Activated naive CD4-positive, alpha-beta T cell treated with anti-CD3 and anti-CD28 coated beads for 36 hours (primary cell): ENCODE measurements at regions of chr3 and their contacts with region 1.

Region 1: GRCh38 chr3:107927361-107928083 is 163.3 kb downstream of the CD47 start:
- DNase-seq: peak; percentile 74
- H3K4me3 Mint-ChIP-seq: peak overlapping the region; percentile 70
- H3K27ac Mint-ChIP-seq: no peak overlapping the region
- H3K4me1 Mint-ChIP-seq: peaks cover 7% of the 10 kb centered on the region
- H3K27me3 Mint-ChIP-seq: peaks cover 11% of the 10 kb centered on the region

Region 2: DNA sequence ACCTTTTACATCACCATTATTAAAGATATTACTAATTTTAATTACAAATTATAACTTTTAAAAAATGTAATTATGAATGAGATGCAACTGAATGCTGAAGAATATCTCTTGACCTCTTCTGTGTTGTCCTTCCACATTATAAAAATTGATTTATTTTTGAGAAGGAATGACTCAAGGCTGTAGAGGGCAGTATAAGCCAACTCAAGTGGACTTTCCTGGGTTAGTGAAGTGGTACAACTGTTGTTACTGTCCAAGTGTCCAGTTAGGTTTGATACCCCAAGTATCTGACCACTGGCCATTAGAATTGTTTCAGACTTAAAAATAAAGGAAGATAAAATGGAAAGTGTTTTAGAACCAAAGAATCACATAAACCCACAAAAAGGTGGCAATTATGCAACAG is 352.9 kb before region 1 on chr3:
- CTCF ChIA-PET with region 1: interaction called, 3 read pairs
- intact Hi-C with region 1: loop called (anchors 2 kb)
- DNase-seq: peak; percentile 22
- H3K4me3 Mint-ChIP-seq: no peak overlapping the region
- H3K27ac Mint-ChIP-seq: no peak overlapping the region
- H3K4me1 Mint-ChIP-seq: peaks cover 27% of the 10 kb centered on the region
- H3K27me3 Mint-ChIP-seq: no peaks in the 10 kb centered on the region

Region 3: GRCh38 chr3:107660306-107660976 is 267.1 kb before region 1 on chr3:
- CTCF ChIA-PET with region 1: no interaction called
- intact Hi-C with region 1: loop called (anchors 2 kb)
- DNase-seq: no peak
- H3K4me3 Mint-ChIP-seq: no peak overlapping the region
- H3K27ac Mint-ChIP-seq: no peak overlapping the region
- H3K4me1 Mint-ChIP-seq: peaks cover 21% of the 10 kb centered on the region
- H3K27me3 Mint-ChIP-seq: no peaks in the 10 kb centered on the region

Region 4: DNA sequence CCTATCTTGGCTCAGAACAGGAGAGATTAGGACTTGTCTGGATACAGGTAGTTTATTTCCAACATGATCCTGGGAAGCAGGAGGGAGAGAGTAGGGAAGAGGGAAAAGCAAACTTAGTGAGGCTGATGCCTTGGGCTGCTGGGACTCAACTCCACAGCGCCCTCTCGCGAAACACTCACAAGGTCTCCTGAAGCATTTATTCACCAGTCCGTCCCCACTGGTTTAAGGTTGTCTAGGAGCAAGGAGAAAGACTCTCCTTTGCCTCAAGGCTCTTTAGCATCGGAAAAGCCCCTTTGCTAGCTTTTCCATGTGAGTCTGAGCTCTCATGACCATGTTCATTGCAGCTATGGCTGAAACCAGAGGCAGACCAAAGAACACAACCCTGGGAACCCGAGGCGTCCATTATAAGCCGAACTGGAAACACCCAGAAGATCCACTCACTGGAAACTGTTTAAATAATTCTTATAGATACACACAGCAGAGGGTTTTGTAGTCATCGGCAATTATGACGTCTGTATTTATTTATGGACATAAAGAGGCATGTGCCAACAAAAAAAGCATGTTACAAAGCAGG is 81.2 kb before region 1 on chr3:
- CTCF ChIA-PET with region 1: interaction called, 10 read pairs
- intact Hi-C with region 1: no loop called
- DNase-seq: peak; percentile 65
- H3K4me3 Mint-ChIP-seq: no peak overlapping the region
- H3K27ac Mint-ChIP-seq: no peak overlapping the region
- H3K4me1 Mint-ChIP-seq: no peaks in the 10 kb centered on the region
- H3K27me3 Mint-ChIP-seq: no peaks in the 10 kb centered on the region

Region 5: GRCh38 chr3:107855708-107856107 is 71.8 kb before region 1 on chr3:
- CTCF ChIA-PET with region 1: interaction called, 12 read pairs
- intact Hi-C with region 1: no loop called
- DNase-seq: no peak
- H3K4me3 Mint-ChIP-seq: no peak overlapping the region
- H3K27ac Mint-ChIP-seq: no peak overlapping the region
- H3K4me1 Mint-ChIP-seq: no peaks in the 10 kb centered on the region
- H3K27me3 Mint-ChIP-seq: peaks cover 3% of the 10 kb centered on the region

Region 6: DNA sequence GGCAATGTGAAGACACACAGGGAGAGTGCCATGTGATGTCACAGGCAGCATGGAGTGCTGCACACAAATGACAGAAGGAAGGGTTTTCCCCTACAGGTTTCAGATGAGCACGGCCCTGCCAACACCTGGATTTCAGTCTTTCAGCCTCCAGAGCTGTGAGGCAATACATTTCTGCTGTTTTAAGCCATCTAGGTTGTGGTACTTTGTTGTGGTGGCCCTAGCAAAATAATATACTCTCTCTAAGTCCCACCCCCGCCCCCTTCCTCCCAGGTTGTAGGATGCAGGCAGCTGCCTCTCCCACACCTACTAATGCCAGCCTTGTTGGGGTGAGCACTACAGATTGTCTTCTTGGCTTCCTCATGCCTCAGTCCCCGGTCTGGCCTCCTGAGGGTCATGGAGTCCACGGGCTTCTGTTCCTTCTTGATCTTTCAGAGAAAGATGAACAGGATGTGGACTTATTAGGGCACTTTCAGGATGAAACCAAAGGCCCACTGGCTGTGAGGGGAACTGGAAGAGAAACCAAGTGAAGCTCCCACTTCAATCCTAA is 16.7 kb before region 1 on chr3:
- CTCF ChIA-PET with region 1: interaction called, 10 read pairs
- intact Hi-C with region 1: loop called (anchors 1 kb)
- DNase-seq: peak; percentile 75
- H3K4me3 Mint-ChIP-seq: no peak overlapping the region
- H3K27ac Mint-ChIP-seq: no peak overlapping the region
- H3K4me1 Mint-ChIP-seq: peaks cover 22% of the 10 kb centered on the region
- H3K27me3 Mint-ChIP-seq: no peaks in the 10 kb centered on the region